HepG2 (cell line): ENCODE measurements at regions of chrX and their contacts with region 1.

Region 1: DNA sequence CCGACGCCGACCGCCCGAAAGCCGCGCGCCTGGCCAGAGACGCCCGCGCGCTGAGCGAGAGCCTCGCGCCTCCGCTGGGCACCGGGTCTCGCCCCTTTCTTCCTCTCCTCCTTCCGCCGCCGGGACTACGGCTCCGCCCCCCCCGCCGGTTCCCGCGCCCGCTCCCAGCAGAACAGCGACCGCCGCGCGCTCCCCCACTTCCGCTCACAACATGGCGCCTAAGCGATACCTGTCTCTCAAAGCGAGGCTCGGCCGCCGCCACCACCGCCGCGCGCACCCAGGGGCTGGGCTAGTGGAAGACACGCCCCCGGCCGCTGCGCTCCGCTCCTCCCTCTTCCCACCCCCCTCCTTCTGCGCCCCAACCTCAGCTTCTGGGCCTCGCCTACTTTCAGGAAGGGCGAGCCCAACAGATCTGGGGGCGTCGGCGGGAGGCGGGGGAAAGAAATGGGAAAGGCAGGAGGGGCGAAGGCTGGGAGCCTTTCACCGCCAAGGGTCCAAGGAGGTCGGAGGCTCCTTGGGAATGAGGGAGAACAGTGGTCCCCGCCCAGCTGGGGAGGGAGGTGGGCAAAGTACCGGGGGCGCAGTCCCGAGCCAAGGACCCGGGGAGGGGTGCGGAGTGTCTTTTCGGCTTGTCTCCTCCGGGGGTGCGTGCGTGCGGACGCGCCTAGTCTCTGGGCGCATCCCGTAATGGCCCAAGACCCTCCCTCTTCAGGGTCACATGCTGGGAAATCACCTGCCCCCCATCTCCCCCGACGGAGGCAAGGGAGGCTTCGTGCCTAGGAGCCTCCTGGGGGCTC is at the start of gene RPS6KA3:
- DNase-seq: peak; percentile 71
- ATAC-seq: peak; percentile 85
- H3K4me3 ChIP-seq: peak within 1 kb of the TSS; percentile 72 to 93 (median 79)
- H3K27ac ChIP-seq: peak within 1 kb of the TSS; percentile 90
- H3K4me1 ChIP-seq: peaks cover 49% of the 10 kb centered on the region
- H3K27me3 ChIP-seq: no peaks in the 10 kb centered on the region; a peak in 1 of 5 replicates
- CTCF ChIP-seq: no peak
- EP300 ChIP-seq: no peak
- POLR2A ChIP-seq: peak; percentile 42 to 57; a peak in 3 of 4 replicates
- RAD21 ChIP-seq: no peak
- total RNA-seq, gene RPS6KA3: 357 and 581 TPM in 2 replicates

Region 2: DNA sequence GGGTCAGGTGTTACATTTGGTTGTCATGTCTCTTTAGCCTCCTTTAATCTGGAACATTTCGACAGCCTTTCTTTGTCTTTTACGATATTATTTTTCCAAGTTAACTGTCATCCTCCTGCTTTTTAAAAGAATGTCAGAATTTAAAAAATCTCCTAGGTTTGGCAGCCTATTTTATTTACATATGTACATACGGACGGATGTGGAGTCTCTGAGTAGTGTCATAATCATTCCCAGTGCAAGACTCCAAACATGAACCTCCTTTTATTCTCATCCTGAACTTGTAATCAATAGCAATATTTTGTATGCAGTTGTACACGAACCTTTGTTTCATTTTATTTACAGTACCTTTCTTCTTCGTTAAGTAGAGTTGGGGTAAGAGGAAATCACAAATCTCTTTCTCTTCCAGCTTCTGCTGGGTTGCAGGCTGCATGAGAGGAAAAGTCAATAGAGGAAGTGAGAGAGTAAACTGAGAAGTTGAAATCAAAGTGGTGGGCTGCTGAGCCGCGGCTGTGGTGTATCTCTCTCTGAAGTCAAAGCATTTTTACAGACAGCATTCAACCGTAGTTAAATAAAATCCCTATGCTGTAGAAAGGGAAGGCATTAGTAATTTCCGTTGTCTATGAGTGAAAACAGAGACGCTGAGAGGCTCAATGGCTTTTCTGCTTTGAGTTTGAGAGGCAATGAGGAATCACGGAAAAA is 53.6 kb after region 1 on chrX:
- CTCF ChIA-PET with region 1: no interaction called
- POLR2A ChIA-PET with region 1: no interaction called
- in situ Hi-C with region 1: no loop called
- intact Hi-C with region 1: loop called (anchors 1 kb)
- DNase-seq: peak; percentile 90
- ATAC-seq: peak; percentile 96
- H3K4me3 ChIP-seq: peak overlapping the region in 2 of 3 experiments; percentile 24 to 28; a peak in 2 of 6 replicates
- H3K27ac ChIP-seq: peak overlapping the region; percentile 79
- H3K4me1 ChIP-seq: peaks cover 66% of the 10 kb centered on the region
- H3K27me3 ChIP-seq: no peaks in the 10 kb centered on the region
- CTCF ChIP-seq: no peak
- EP300 ChIP-seq: peak in 1 of 2 experiments; percentile 92; a peak in 2 of 4 replicates
- POLR2A ChIP-seq: no peak
- RAD21 ChIP-seq: no peak

Region 3: DNA sequence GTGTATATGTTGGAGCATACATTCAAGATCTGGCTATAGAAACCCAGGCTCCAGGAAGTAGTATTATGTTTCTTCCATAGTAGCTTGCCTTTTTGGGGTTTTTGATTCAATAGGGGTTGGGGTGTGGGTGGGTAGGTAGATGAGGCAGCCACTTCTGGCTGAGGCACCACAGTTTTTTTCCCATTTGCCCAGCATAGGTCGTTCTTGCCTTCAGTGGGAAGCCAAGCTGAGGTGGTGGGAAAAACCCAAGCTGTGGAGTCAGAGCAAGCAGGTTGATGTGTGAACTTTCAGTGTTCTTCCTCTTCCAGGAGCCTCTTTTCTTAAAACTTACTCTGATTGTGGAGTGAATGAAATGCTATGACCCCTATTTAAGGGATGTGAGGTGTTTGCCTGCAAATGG is 66.7 kb after region 1 on chrX:
- CTCF ChIA-PET with region 1: no interaction called
- POLR2A ChIA-PET with region 1: no interaction called
- in situ Hi-C with region 1: no loop called
- intact Hi-C with region 1: no loop called
- DNase-seq: no peak
- ATAC-seq: no peak
- H3K4me3 ChIP-seq: no peak overlapping the region
- H3K27ac ChIP-seq: no peak overlapping the region
- H3K4me1 ChIP-seq: peaks cover 26% of the 10 kb centered on the region
- H3K27me3 ChIP-seq: no peaks in the 10 kb centered on the region
- CTCF ChIP-seq: no peak
- EP300 ChIP-seq: no peak
- POLR2A ChIP-seq: no peak
- RAD21 ChIP-seq: no peak